ENCODE measurements at regions of chr6 and their contacts with region 1.

Region 1: GRCh38 chr6:114096561-114097172 is 125.7 kb upstream of the HDAC2 start:
- DNase-seq: no peak
- ATAC-seq: no peak; the same call in 1 of the 2 replicates
- H3K4me3 ChIP-seq: no peak overlapping the region
- H3K27ac ChIP-seq: no peak overlapping the region
- H3K4me1 ChIP-seq: no peaks in the 10 kb centered on the region
- H3K27me3 ChIP-seq: no peaks in the 10 kb centered on the region
- CTCF ChIP-seq: peak; percentile 86; the same call in 1 of the 2 replicates

Region 2: DNA sequence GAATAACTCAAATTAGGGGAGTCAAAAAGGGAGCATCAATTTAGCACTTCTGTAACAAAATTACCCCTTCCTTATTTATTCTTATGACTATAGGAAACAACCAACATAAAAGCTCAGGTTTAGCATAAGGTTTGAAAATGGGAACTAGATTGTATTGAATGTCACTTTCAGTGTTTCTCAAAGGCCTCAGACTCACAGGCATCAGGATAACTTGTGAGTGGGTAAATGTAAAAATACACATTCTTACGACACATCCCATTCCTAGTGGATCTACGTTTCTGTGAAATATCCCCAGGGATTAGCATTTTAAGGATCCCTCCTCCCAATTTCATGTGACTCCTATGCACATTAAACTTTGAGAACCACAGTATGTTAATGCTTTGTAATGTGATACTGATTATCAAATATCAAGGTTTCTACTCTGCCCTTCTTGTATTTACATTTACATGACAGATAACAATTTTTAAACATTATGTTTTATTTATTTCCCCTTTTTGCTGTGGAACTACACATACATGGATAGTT is 131.3 kb after region 1 on chr6:
- CTCF ChIA-PET with region 1: no interaction called
- POLR2A ChIA-PET with region 1: no interaction called
- in situ Hi-C with region 1: no loop called
- intact Hi-C with region 1: no loop called
- DNase-seq: no peak
- ATAC-seq: no peak
- H3K4me3 ChIP-seq: no peak overlapping the region
- H3K27ac ChIP-seq: no peak overlapping the region
- H3K4me1 ChIP-seq: no peaks in the 10 kb centered on the region
- H3K27me3 ChIP-seq: no peaks in the 10 kb centered on the region; the same call in 1 of the 2 replicates
- CTCF ChIP-seq: no peak

Region 3: GRCh38 chr6:114304304-114304887 is 207.7 kb after region 1 on chr6:
- CTCF ChIA-PET with region 1: no interaction called
- POLR2A ChIA-PET with region 1: no interaction called
- in situ Hi-C with region 1: no loop called
- intact Hi-C with region 1: loop called (anchors 1 kb)
- DNase-seq: peak; percentile 13
- ATAC-seq: no peak
- H3K4me3 ChIP-seq: no peak overlapping the region
- H3K27ac ChIP-seq: no peak overlapping the region
- H3K4me1 ChIP-seq: no peaks in the 10 kb centered on the region
- H3K27me3 ChIP-seq: no peaks in the 10 kb centered on the region
- CTCF ChIP-seq: peak; percentile 75; the same call in 1 of the 2 replicates

Region 4: GRCh38 chr6:115896538-115897129 is 1800.0 kb after region 1 on chr6:
- CTCF ChIA-PET with region 1: no interaction called
- POLR2A ChIA-PET with region 1: no interaction called
- in situ Hi-C with region 1: no loop called
- intact Hi-C with region 1: loop called (anchors 10 kb)
- DNase-seq: peak; percentile 56
- ATAC-seq: peak; percentile 76; the same call in 1 of the 2 replicates
- H3K4me3 ChIP-seq: no peak overlapping the region
- H3K27ac ChIP-seq: no peak overlapping the region
- H3K4me1 ChIP-seq: no peaks in the 10 kb centered on the region
- H3K27me3 ChIP-seq: no peaks in the 10 kb centered on the region; the same call in 1 of the 2 replicates
- CTCF ChIP-seq: peak; percentile 85; the same call in 1 of the 2 replicates

Measured in Panc1 (cell line).